OCI-LY7 (cell line): ENCODE measurements at regions of chr7 and their contacts with region 1.

Region 1: DNA sequence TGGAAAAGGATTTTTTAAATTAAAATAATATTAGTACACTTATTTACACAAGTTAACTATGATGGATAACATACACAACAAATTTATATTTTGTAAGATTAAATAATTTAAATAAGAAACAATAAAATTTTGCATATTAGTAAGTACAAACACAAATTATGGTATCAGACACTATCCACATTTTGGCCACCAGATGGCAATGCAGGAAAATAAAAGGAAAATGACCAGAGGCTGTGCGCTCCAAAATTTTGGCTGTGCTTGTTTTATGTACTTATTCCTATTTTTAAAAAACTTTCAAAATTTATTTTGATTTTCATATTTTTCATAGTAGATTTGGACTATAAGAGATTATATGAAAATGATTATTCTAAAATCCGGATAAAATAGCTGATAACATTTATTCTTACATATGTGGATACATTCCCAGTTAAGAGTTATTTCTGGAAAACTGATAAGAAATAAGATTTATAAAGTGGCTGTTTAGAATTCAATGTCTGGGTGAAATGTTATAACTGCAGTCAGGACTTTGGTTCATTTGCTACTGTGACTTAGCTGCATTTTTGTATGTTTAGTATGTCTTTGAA is 274.7 kb upstream of the HGF start:
- DNase-seq: peak; percentile 37
- H3K4me3 ChIP-seq: no peak overlapping the region
- H3K27ac ChIP-seq: no peak overlapping the region
- H3K4me1 ChIP-seq: no peaks in the 10 kb centered on the region
- CTCF ChIP-seq: peak; percentile 86

Region 2: GRCh38 chr7:82481499-82482097 is 437.0 kb after region 1 on chr7:
- CTCF ChIA-PET with region 1: no interaction called
- POLR2A ChIA-PET with region 1: no interaction called
- intact Hi-C with region 1: loop called (anchors 10 kb)
- DNase-seq: peak; percentile 13
- H3K4me3 ChIP-seq: no peak overlapping the region
- H3K27ac ChIP-seq: no peak overlapping the region
- H3K4me1 ChIP-seq: no peaks in the 10 kb centered on the region
- CTCF ChIP-seq: peak; percentile 82

Region 3: GRCh38 chr7:82572195-82572880 is 527.7 kb after region 1 on chr7:
- CTCF ChIA-PET with region 1: no interaction called
- POLR2A ChIA-PET with region 1: no interaction called
- intact Hi-C with region 1: loop called (anchors 2 kb)
- DNase-seq: peak; percentile 76
- H3K4me3 ChIP-seq: no peak overlapping the region
- H3K27ac ChIP-seq: no peak overlapping the region
- H3K4me1 ChIP-seq: no peaks in the 10 kb centered on the region
- CTCF ChIP-seq: peak; percentile 96

Region 4: DNA sequence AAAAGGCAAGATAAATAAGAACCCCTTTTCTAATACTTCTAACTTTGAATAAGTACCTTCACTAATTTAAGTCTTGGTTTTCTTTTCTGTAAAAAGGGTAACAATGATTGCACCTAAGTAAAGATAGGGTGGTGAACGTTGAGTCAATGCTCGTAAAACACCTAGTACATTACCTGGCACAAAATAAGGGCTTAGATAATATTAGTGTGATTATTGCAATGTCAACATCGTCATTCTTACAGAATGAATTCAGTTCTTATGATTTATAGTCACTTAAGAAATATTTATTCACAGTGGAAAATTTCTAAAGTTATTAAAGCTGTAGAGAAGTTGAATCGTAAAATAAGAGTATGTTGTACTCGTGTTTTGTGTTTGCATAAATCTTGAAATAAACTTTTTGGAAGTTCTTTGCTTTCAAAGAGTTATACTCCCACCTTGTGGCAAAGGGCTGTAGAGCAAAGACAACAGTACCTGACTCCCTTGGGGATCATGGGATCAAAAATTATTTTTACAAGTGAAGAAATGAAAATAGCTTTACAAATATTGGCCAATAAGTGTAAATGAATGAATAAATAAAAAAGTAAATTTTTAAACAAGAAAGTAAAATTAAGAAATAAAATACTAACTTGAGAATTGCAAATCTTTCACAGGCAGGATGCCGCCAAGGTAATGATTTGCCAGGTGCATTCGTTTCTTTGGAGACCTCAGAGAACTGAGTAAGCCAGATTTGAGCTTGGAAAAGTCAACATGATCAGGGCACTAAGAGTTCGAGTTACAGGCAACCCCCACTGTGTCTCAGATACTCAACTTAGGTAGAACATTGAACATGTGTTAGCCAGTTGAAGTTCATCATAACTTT is 684.8 kb after region 1 on chr7:
- CTCF ChIA-PET with region 1: no interaction called
- POLR2A ChIA-PET with region 1: no interaction called
- intact Hi-C with region 1: loop called (anchors 10 kb)
- DNase-seq: peak; percentile 34
- H3K4me3 ChIP-seq: no peak overlapping the region
- H3K27ac ChIP-seq: no peak overlapping the region
- H3K4me1 ChIP-seq: no peaks in the 10 kb centered on the region
- CTCF ChIP-seq: peak; percentile 85

Region 5: GRCh38 chr7:83427929-83428328 is 1383.3 kb after region 1 on chr7:
- CTCF ChIA-PET with region 1: no interaction called
- POLR2A ChIA-PET with region 1: no interaction called
- intact Hi-C with region 1: no loop called
- DNase-seq: no peak
- H3K4me3 ChIP-seq: no peak overlapping the region
- H3K27ac ChIP-seq: no peak overlapping the region
- H3K4me1 ChIP-seq: no peaks in the 10 kb centered on the region
- CTCF ChIP-seq: no peak